Motor neuron (in vitro differentiated cells): ENCODE measurements at regions of chr9 and their contacts with region 1.

Region 1: DNA sequence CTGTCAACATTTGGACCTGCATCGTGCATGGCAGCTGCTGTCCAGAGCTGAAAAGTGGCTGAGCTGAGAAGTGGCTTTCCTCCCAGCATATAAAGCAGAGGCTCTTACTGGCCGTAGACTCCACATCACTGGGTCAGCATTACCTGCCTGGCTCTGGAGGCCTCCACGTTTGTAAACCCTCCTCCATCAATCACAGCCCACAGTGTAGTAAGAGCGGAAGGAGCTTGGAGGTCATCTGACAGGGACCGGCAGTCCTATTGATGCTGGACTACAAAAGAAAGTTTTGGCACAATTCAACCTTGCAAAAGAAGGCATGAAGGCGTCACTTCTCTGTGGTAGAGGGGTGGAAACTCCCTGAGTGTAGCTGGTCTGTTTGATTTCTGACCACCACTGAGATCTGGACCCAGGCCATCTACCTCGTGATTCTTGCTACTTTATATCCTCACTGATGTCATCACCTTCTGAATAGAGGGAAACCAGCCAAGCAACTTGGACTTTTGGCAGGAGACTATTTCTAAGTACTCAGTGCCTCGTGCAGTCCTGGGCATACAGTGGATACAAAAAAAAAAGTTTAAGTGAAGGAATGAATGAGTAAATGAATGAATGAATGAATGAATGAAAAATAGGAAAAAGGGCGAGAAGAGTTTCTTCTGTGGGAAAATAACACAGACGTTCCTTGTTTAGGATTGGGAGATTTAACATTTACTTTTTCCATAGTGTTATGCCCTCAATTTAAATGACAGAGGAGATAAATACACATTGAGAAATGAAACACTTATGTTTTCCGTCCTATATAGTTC is 14.8 kb downstream of the RASEF start:
- ATAC-seq: peak in 2 of 8 experiments; percentile 13 to 35
- H3K4me3 ChIP-seq: no peak overlapping the region
- H3K27ac ChIP-seq: no peak overlapping the region
- H3K4me1 ChIP-seq: peaks cover 0 to 12% of the 10 kb centered on the region in 2 donors

Region 2: DNA sequence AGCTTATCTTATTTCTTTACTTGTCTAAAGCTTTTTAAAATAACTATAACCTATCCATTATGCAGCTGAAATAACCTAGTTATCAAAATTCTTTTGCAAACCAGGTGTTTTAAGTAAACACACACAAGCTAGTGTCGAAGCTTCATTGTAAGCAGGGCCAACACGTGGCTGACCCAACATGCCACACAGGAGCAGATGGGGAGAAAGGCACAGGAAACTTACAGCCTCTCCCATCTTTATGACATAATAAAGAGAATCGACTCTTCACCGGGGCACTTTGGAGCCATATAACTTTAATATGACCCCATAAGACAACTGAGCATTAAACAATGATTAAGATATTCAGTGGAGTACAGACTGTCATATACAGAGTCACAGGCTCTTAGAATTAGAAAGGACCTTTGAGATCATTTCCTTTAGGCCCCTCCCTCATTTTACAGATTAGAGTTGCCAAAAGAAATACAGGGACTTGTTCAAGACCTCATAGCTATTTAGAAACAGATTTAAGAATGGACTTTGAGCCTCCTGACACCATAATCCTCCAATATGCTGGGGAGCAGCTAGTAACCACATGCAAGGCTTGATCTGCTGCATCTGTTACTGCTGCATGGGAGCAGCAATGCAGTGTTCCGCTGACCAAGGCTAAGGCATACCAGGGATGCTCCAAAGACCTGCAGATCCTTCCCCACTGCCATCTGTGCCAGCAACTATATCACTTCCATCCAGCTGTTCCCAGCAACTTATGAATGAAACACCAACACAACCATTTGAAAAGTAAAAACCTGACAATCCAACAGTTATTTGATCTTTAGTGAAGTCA is 60.6 kb before region 1 on chr9:
- in situ Hi-C with region 1: loop called in 1 of 9 experiments (anchors 10 kb)
- ATAC-seq: no peak
- H3K4me3 ChIP-seq: no peak overlapping the region
- H3K27ac ChIP-seq: no peak overlapping the region
- H3K4me1 ChIP-seq: no peaks in the 10 kb centered on the region

Region 3: GRCh38 chr9:83196946-83197345 is 148.8 kb after region 1 on chr9:
- in situ Hi-C with region 1: no loop called
- ATAC-seq: peak in 2 of 8 experiments; percentile 36 to 38
- H3K4me3 ChIP-seq: no peak overlapping the region
- H3K27ac ChIP-seq: no peak overlapping the region
- H3K4me1 ChIP-seq: peaks cover 3 to 5% of the 10 kb centered on the region in 2 donors